ENCODE measurements at regions of chr16 and their contacts with region 1.

Region 1: GRCh38 chr16:26645614-26646013 is 421.1 kb upstream of the C16orf82 start:
- DNase-seq: peak; percentile 90
- H3K4me3 Mint-ChIP-seq: peak overlapping the region; percentile 42
- H3K27ac Mint-ChIP-seq: peak overlapping the region; percentile 55
- H3K4me1 Mint-ChIP-seq: peaks cover 50% of the 10 kb centered on the region
- H3K27me3 Mint-ChIP-seq: no peaks in the 10 kb centered on the region

Region 2: GRCh38 chr16:26295625-26296304 is 349.8 kb before region 1 on chr16:
- intact Hi-C with region 1: no loop called
- DNase-seq: no peak
- H3K4me3 Mint-ChIP-seq: no peak overlapping the region
- H3K27ac Mint-ChIP-seq: no peak overlapping the region
- H3K4me1 Mint-ChIP-seq: no peaks in the 10 kb centered on the region
- H3K27me3 Mint-ChIP-seq: no peaks in the 10 kb centered on the region

Region 3: DNA sequence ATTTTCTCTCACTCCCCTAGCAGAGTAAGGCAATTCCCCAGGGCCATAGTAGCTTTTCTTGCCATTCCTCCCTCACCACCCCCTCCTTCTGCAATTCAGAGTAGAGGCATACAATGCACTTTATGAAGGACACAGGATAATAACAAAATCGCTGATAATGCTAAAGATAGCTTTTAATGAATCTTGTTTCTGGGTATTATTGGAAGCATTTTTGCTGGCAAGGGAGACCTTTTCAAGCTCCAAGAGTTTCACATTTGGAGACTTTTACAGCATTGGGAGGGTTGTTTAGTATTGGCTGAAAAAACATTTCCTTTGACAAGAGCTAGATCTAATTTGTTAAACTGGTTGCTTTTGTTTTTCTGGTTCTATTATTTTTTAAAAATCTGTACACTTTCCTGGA is 151.9 kb before region 1 on chr16:
- intact Hi-C with region 1: loop called (anchors 10 kb)
- DNase-seq: peak; percentile 16
- H3K4me3 Mint-ChIP-seq: no peak overlapping the region
- H3K27ac Mint-ChIP-seq: no peak overlapping the region
- H3K4me1 Mint-ChIP-seq: no peaks in the 10 kb centered on the region
- H3K27me3 Mint-ChIP-seq: peaks cover 26% of the 10 kb centered on the region

Measured in activated CD4-positive, alpha-beta T cell treated with anti-CD3 and anti-CD28 coated beads, Interleukin-2, amount 10 ng/mL, durations not matched to agents 24 days and 14 days (primary cell).